PC-9 (cell line): ENCODE measurements at regions of chr3 and their contacts with region 1.

Region 1: DNA sequence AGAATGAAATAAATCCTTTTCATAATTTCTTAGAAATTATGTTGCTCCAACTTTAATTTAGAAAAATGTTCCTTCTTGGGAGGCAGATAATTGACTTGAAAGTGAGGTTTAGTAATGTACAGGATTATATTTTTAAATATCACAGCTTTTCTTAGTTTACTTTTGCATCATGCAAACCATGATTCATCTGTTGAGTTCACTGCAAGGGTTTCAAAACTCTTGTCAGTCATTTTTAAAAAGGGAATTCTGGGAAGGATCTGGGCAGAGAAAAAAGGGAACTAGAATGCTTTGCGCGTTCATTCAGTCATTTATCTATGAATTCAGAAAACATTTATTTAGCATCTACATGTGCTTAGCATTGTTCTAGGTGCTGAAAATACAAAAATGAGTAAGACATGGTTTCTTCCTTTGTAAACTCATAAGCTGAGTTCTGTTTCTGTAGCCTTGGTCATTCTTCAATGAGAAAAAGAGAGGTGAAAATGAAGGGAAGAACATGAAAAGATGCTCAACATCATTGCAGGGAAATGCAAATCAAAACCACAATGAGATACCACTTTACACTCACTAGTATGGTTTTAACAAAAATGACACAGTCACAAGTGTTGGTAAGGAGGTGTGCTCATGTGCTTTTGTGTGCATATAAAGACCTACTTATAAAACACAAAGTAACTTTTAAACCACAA is 209.1 kb downstream of the NR1D2 start:
- DNase-seq: no peak
- H3K4me3 ChIP-seq: no peak overlapping the region
- H3K27ac ChIP-seq: peak overlapping the region; percentile 27
- H3K4me1 ChIP-seq: peaks cover 64% of the 10 kb centered on the region
- H3K27me3 ChIP-seq: no peaks in the 10 kb centered on the region
- CTCF ChIP-seq: no peak

Region 2: GRCh38 chr3:24069045-24069444 is 85.1 kb before region 1 on chr3:
- CTCF ChIA-PET with region 1: interaction called, 3 read pairs
- POLR2A ChIA-PET with region 1: no interaction called
- intact Hi-C with region 1: loop called (anchors 10 kb)
- DNase-seq: peak in 1 of 2 experiments; percentile 17
- H3K4me3 ChIP-seq: no peak overlapping the region
- H3K27ac ChIP-seq: no peak overlapping the region
- H3K4me1 ChIP-seq: no peaks in the 10 kb centered on the region
- H3K27me3 ChIP-seq: no peaks in the 10 kb centered on the region
- CTCF ChIP-seq: peak; percentile 57

Region 3: GRCh38 chr3:24128195-24129005 is 25.8 kb before region 1 on chr3:
- CTCF ChIA-PET with region 1: no interaction called
- POLR2A ChIA-PET with region 1: interaction called, 4 read pairs
- intact Hi-C with region 1: loop called (anchors 2 kb)
- DNase-seq: peak; percentile 19 to 76
- H3K4me3 ChIP-seq: no peak overlapping the region
- H3K27ac ChIP-seq: peak overlapping the region; percentile 49
- H3K4me1 ChIP-seq: peaks cover 23% of the 10 kb centered on the region
- H3K27me3 ChIP-seq: no peaks in the 10 kb centered on the region
- CTCF ChIP-seq: no peak

Region 4: DNA sequence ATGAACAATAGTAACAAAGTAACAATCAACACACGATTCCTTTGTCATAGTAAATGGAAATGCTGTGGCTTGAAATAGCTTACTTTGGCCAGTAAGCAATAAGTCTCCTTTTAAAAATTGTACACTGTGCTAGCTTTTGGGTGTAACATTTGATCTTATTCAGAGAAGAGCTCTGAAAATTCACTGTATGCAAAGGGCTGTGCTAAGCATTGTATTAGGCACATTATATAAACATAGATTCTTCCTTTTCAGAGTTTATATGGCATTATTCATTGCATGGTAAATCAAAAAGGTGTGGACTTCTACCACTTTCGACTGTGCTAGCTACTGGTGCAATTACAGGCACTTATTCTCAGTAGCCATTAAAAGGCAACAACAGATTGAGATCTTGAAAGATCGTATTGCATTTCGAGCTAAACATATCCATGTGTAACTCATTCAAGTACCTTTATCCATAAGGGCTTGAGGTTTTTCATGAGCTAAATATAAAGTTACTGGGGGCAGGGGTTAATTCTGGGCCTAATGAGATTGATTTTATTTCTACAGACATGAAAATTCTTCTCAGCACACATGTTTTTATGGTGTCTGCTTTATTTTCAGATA is 37.7 kb after region 1 on chr3:
- CTCF ChIA-PET with region 1: interaction called, 4 read pairs
- POLR2A ChIA-PET with region 1: interaction called, 10 read pairs
- intact Hi-C with region 1: no loop called
- DNase-seq: no peak
- H3K4me3 ChIP-seq: no peak overlapping the region
- H3K27ac ChIP-seq: no peak overlapping the region
- H3K4me1 ChIP-seq: no peaks in the 10 kb centered on the region
- H3K27me3 ChIP-seq: no peaks in the 10 kb centered on the region
- CTCF ChIP-seq: no peak

Region 5: DNA sequence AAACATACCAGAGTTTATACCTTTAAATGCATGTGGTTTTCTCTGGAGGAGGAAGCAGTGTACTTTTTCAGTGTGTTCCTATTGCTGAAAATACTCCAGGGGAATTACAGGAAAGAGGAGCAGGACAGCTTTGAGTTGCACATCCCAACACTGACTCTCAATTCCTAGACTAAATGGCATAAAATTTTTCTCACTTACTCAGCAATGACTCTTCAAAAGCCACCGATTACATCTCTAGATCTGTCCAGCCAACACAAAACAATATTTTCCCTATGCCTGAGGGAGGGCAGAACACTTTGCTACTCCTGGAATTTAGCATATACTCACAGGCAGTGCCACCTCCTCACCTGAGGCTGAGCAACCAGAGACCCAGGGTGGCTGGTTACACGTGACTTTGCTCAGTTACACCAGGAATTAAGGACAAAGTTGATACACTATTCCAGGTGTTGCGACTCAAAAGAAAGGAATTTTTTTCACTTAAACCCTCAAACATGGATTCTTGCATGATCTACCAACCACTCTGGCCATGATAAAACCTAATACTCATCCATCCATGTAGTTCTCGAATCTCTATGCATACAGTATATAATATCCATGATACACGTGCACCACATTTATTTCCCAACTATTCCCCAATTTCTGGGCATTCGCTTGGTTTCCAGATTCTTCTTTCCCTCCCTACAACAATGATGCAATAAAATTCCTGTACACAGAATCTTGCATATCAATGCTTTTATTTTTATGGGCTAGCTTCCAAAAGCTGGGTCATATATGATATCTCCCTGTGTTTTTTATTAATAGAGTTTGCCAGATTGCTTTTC is 145.9 kb after region 1 on chr3:
- CTCF ChIA-PET with region 1: no interaction called
- POLR2A ChIA-PET with region 1: no interaction called
- intact Hi-C with region 1: loop called (anchors 1 kb)
- DNase-seq: peak; percentile 75 to 91
- H3K4me3 ChIP-seq: no peak overlapping the region
- H3K27ac ChIP-seq: peak overlapping the region; percentile 72
- H3K4me1 ChIP-seq: peaks cover 24% of the 10 kb centered on the region
- H3K27me3 ChIP-seq: no peaks in the 10 kb centered on the region
- CTCF ChIP-seq: no peak

Region 6: DNA sequence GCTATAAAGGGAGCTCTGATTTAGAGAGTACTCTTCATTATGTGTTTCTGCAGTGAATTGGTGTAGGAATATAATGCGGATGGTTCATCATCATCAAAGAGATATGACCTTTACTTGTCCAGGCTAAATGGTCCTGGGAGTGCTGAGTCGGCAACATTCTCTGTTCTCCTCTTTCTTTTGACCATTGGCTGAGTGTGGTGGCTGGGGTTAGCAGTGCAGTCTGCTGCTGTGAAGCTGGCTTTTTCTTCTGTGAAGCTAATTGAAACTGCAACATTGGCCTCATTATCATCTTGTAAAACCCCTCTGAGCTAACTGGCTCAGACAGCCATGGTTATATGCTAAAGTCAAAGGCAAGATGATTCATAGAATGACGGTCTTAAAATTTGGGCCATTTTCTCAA is 256.7 kb after region 1 on chr3:
- CTCF ChIA-PET with region 1: no interaction called
- POLR2A ChIA-PET with region 1: no interaction called
- intact Hi-C with region 1: no loop called
- DNase-seq: no peak
- H3K4me3 ChIP-seq: no peak overlapping the region
- H3K27ac ChIP-seq: no peak overlapping the region
- H3K4me1 ChIP-seq: no peaks in the 10 kb centered on the region
- H3K27me3 ChIP-seq: no peaks in the 10 kb centered on the region
- CTCF ChIP-seq: no peak